ENCODE measurements at regions of chrX and their contacts with region 1.

Region 1: DNA sequence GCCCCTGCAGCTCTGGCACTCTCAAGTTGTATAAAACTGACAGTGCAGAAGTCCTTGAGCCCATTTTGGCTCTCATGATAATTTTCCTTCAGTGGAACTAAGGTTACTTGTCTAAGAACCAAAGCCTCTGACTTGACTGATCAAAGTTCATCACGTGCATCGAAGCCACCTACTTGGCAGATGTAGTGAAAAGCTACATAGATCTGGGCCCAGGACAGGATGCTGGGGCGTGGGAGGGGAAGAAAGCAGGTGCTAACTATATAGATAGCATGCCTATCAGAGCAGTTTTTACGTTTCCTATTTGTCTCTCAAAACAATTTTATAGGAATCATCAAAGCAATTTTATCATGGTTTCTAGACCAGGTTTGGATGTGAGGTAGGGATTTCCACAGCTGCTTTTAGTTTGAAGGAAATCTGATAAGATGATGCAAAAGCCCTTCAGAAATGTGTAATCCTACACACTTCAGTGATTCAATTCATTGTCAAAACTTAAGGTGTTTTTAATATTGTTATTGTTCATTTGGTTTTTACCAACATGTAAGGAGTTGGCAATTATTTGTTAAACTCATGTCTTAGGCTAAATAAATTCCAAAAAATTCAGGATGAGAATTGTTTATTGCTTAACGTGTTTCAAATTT is 1.2 kb upstream of the CD40LG start:
- DNase-seq: peak; percentile 78
- H3K4me3 Mint-ChIP-seq: peak overlapping the region; percentile 93
- H3K27ac Mint-ChIP-seq: peak overlapping the region; percentile 99
- H3K4me1 Mint-ChIP-seq: peaks cover 53% of the 10 kb centered on the region
- H3K27me3 Mint-ChIP-seq: no peaks in the 10 kb centered on the region

Region 2: GRCh38 chrX:136616987-136617685 is 29.6 kb before region 1 on chrX:
- CTCF ChIA-PET with region 1: interaction called, 3 read pairs
- POLR2A ChIA-PET with region 1: interaction called, 61 read pairs
- intact Hi-C with region 1: loop called (anchors 1 kb)
- DNase-seq: peak; percentile 40
- H3K4me3 Mint-ChIP-seq: peak overlapping the region; percentile 49
- H3K27ac Mint-ChIP-seq: peak overlapping the region; percentile 92
- H3K4me1 Mint-ChIP-seq: peaks cover 53% of the 10 kb centered on the region
- H3K27me3 Mint-ChIP-seq: no peaks in the 10 kb centered on the region

Region 3: GRCh38 chrX:136635235-136635634 is 11.5 kb before region 1 on chrX:
- CTCF ChIA-PET with region 1: no interaction called
- POLR2A ChIA-PET with region 1: interaction called, 27 read pairs
- intact Hi-C with region 1: loop called (anchors 1 kb)
- DNase-seq: no peak
- H3K4me3 Mint-ChIP-seq: peak overlapping the region; percentile 70
- H3K27ac Mint-ChIP-seq: peak overlapping the region; percentile 91
- H3K4me1 Mint-ChIP-seq: peaks cover 80% of the 10 kb centered on the region
- H3K27me3 Mint-ChIP-seq: no peaks in the 10 kb centered on the region

Region 4: GRCh38 chrX:136687457-136687856 is 40.7 kb after region 1 on chrX:
- CTCF ChIA-PET with region 1: interaction called, 3 read pairs
- POLR2A ChIA-PET with region 1: interaction called, 3 read pairs
- intact Hi-C with region 1: loop called (anchors 2 kb)
- DNase-seq: peak; percentile 48
- H3K4me3 Mint-ChIP-seq: peak overlapping the region; percentile 17
- H3K27ac Mint-ChIP-seq: peak overlapping the region; percentile 83
- H3K4me1 Mint-ChIP-seq: peaks cover 53% of the 10 kb centered on the region
- H3K27me3 Mint-ChIP-seq: no peaks in the 10 kb centered on the region